Activated CD4-positive, alpha-beta T cell treated with anti-CD3 and anti-CD28 coated beads for 36 hours (primary cell): ENCODE measurements at regions of chrX and their contacts with region 1.

Region 1: DNA sequence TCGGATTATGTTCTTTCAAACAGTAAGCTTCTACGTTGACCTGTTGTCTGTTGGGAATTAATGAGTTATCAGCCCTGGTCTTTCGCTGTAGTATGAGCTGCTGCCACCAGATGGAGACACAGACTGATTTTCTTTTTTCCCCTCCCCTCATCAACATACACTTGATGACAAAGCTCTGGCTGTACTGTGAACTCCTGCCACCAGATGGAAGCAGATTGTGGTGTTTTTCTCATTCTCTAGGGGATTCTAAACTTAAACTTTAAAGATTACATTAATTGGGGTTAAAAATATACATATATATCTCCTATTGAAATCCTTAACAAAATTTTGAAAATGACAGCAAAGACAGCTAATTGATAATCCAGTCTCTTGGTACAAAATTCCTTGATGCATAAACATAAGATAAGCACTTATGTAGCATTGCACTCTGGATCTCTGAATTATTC is 44.8 kb downstream of the SMS start:
- DNase-seq: peak; percentile 72
- ATAC-seq: peak; percentile 79
- H3K4me3 Mint-ChIP-seq: no peak overlapping the region
- H3K27ac Mint-ChIP-seq: no peak overlapping the region
- H3K4me1 Mint-ChIP-seq: peaks cover 21% of the 10 kb centered on the region
- H3K27me3 Mint-ChIP-seq: no peaks in the 10 kb centered on the region

Region 2: DNA sequence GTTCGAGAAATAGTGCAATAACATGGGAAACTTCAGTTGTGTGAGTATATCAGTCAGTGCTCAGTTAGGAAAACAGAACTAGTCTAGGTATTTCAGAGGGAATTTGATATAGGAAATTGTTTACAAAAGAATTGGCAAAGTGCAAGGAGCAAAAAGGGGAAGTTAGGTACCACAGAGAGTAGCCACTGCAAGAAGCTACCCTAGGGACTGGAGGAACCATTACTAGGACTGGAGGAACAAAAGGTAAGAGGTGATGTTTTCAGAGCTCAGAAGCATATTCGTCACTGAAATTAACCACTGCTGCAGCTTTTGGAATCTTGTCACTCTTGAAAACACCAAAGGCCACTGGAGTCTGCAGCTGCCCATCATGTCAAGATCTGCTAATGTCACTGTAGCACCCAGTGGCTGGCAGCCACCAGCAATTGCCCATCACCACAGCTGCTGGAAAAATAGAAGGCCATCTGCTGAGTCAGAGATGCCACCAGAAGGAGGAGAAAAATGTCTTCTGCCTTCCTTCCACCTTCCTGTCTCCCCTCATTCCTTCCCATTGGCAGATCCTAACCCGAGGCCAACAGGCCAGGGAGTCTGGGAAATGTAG is 1558.1 kb before region 1 on chrX:
- CTCF ChIA-PET with region 1: no interaction called
- POLR2A ChIA-PET with region 1: no interaction called
- intact Hi-C with region 1: no loop called
- DNase-seq: no peak
- ATAC-seq: no peak
- H3K4me3 Mint-ChIP-seq: no peak overlapping the region
- H3K27ac Mint-ChIP-seq: no peak overlapping the region
- H3K4me1 Mint-ChIP-seq: peaks cover 2% of the 10 kb centered on the region
- H3K27me3 Mint-ChIP-seq: no peaks in the 10 kb centered on the region

Region 3: DNA sequence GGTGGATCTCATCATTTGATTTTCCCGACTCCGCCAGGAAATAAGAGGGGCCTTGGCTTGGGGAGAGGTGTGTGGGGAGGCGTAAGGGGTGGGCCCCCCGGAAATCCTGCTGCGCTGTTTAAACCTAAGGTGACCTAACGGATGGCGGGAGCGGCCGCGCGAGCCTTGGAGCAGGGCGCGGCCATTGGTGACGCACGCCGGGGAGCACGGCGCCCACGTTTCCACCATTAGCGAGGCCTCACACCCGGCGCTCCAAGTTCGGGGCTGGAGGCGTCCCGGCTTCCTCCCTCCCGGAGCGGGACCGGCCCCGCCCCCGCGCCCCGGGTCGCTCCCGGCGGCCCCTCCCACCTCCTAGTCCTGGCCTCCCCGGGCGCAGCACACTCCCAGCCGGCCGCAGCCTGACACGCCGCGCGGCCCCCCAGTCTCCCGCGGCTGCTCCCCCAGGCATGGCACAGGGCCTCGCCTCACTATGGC is 45.0 kb before region 1 on chrX and contains the start of gene SMS:
- CTCF ChIA-PET with region 1: interaction called, 3 read pairs
- POLR2A ChIA-PET with region 1: no interaction called
- intact Hi-C with region 1: loop called in 1 of 2 experiments (anchors 5 kb)
- DNase-seq: peak; percentile 78
- ATAC-seq: peak; percentile 65
- H3K4me3 Mint-ChIP-seq: peak within 1 kb of the TSS; percentile 83
- H3K27ac Mint-ChIP-seq: peak within 1 kb of the TSS; percentile 91
- H3K4me1 Mint-ChIP-seq: peaks cover 32% of the 10 kb centered on the region
- H3K27me3 Mint-ChIP-seq: no peaks in the 10 kb centered on the region
- total RNA-seq, gene SMS: 100 to 124 TPM

Region 4: DNA sequence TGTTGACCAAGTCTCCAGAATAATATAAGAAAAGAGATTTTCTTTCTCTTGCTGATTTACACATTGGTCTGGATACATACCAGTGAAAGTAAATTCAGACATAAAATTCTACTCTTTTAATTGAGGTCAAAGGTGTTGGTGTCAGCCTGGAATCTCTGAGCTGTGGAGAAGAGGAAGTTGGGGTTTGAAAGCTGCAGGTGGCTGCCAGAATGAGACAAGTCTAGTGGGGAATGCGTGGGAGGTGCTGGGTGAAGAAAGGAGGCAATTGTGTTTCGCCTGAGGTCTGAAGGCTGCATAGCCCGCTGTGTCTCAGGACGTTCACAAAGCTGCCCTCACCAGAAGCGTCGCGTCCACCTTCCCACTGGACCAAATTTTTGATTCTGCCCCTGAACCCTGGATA is 77.9 kb after region 1 on chrX:
- CTCF ChIA-PET with region 1: interaction called, 5 read pairs
- POLR2A ChIA-PET with region 1: no interaction called
- intact Hi-C with region 1: loop called (anchors 2 to 5 kb)
- DNase-seq: peak; percentile 59
- ATAC-seq: peak; percentile 33
- H3K4me3 Mint-ChIP-seq: no peak overlapping the region
- H3K27ac Mint-ChIP-seq: peak overlapping the region; percentile 63
- H3K4me1 Mint-ChIP-seq: peaks cover 72% of the 10 kb centered on the region
- H3K27me3 Mint-ChIP-seq: no peaks in the 10 kb centered on the region

Region 5: GRCh38 chrX:22135994-22136684 is 150.8 kb after region 1 on chrX:
- CTCF ChIA-PET with region 1: interaction called, 14 read pairs
- POLR2A ChIA-PET with region 1: no interaction called
- intact Hi-C with region 1: loop called (anchors 1 to 2 kb)
- DNase-seq: peak; percentile 12
- ATAC-seq: peak; percentile 49
- H3K4me3 Mint-ChIP-seq: no peak overlapping the region
- H3K27ac Mint-ChIP-seq: peak overlapping the region; percentile 47
- H3K4me1 Mint-ChIP-seq: peaks cover 15% of the 10 kb centered on the region
- H3K27me3 Mint-ChIP-seq: no peaks in the 10 kb centered on the region

Region 6: DNA sequence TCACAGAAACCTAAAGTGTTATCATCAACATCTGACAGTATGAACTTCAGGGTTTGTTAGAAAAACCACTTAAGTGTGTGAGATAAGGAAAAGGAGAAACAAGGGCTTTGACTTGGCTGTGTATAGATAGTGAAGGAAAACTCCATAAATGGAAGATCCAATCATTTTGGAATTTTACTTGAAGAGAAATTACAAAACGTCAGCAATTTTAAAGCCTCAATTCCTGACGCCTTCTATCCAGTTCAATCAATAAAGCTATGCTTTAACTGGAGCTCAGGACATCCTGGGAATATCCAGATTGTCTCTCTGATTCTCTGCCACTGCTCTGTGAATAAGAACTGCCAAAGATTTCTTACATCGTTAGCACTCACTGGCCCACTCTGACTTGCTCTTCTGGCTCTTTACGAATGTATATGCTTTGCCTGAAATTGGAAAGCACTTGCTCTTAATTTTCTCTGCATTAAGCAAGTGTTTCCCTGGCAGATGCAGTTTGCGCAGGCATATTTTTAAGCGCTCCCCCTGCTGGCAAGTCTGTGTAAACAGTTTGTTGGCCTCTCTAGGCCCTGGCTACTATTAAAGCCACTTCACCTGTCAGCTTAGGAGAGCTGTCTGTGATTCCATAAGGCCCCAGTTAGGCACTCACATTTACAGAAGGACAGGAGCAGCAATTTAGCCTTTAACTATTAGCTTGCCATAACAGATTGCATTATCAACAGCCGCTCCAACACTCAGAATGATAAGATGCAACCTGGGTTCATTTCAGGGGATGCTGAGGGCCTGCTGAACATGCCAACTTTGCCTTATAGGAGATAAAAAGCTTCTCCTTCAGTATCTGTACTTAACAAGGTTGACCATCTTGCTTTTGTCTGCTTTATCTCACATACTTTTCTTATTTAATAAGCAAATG is 763.0 kb after region 1 on chrX:
- CTCF ChIA-PET with region 1: interaction called, 6 read pairs
- POLR2A ChIA-PET with region 1: no interaction called
- intact Hi-C with region 1: loop called in 1 of 2 experiments (anchors 1 kb)
- DNase-seq: peak; percentile 52
- ATAC-seq: peak; percentile 51
- H3K4me3 Mint-ChIP-seq: no peak overlapping the region
- H3K27ac Mint-ChIP-seq: no peak overlapping the region
- H3K4me1 Mint-ChIP-seq: no peaks in the 10 kb centered on the region
- H3K27me3 Mint-ChIP-seq: peaks cover 3% of the 10 kb centered on the region